ENCODE measurements at regions of chr9 and their contacts with region 1.

Region 1: GRCh38 chr9:14441976-14442651 is 128.2 kb upstream of the NFIB start:
- DNase-seq: no peak
- H3K4me3 ChIP-seq: no peak overlapping the region
- H3K27ac ChIP-seq: no peak overlapping the region
- H3K4me1 ChIP-seq: peaks cover 0 to 3% (median 1%) of the 10 kb centered on the region in 4 experiments; a peak in 2 of 7 replicates
- H3K27me3 ChIP-seq: no peaks in the 10 kb centered on the region
- CTCF ChIP-seq: peak; percentile 60 to 77 (median 73)
- EP300 ChIP-seq: no peak
- POLR2A ChIP-seq: no peak
- RAD21 ChIP-seq: peak; percentile 71 to 79

Region 2: DNA sequence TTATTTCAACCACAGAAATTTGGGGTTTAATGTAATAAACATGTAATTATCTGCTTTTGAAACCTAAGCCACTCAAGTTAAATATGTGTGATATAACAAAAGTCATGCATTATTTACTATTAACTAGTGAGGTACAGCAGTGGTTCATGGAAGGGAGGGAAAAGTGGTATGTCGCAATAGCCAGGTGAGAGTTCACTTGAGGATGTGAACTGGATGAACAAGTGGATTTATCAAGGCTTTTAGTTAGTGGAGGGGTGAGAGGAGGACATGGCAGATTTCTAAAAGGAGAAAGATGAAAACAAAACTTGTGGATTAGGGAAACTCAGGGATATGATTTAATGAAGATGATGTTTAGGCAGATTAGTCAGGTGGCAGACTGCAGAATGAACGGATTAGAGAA is 13.1 kb after region 1 on chr9:
- CTCF ChIA-PET with region 1: interaction called, 11 read pairs
- POLR2A ChIA-PET with region 1: no interaction called
- DNase-seq: no peak
- H3K4me3 ChIP-seq: no peak overlapping the region
- H3K27ac ChIP-seq: no peak overlapping the region
- H3K4me1 ChIP-seq: no peaks in the 10 kb centered on the region
- H3K27me3 ChIP-seq: no peaks in the 10 kb centered on the region
- CTCF ChIP-seq: no peak
- EP300 ChIP-seq: no peak
- POLR2A ChIP-seq: no peak
- RAD21 ChIP-seq: no peak

Region 3: DNA sequence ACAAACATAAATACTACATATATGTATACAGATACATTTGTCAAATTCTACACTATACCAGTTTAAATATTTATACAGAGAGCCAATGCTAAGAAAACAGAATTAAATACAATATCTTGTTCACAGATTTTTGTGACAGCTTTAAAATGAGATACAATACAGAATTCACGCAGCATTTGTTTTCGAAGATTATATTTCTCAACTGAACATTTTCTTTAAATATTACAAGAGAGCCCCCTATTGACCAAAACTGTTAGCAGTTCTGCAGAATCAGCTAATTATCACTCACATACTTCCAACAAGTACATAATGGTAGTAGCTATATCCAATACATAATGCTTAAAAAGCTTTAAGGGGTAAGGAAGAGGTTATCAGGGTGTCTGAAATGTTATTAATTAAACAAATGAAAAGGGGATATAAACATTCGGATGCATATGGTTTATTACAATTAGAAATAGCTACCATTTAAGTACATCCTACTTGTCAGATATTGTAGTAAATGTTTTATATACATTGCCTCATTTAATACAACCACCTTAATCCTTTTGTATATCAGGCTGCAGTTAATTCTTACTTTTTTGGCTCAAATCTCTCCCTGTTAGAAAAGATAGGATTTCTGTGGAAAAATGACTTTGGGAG is 219.4 kb after region 1 on chr9:
- CTCF ChIA-PET with region 1: interaction called, 24 read pairs
- POLR2A ChIA-PET with region 1: no interaction called
- DNase-seq: no peak
- H3K4me3 ChIP-seq: no peak overlapping the region
- H3K27ac ChIP-seq: no peak overlapping the region
- H3K4me1 ChIP-seq: no peaks in the 10 kb centered on the region
- H3K27me3 ChIP-seq: no peaks in the 10 kb centered on the region
- CTCF ChIP-seq: peak in 2 of 3 experiments; percentile 16 to 41; a peak in 2 of 4 replicates
- EP300 ChIP-seq: no peak
- POLR2A ChIP-seq: no peak
- RAD21 ChIP-seq: peak; percentile 48 to 53